ENCODE measurements at regions of chr1 and their contacts with region 1.

Region 1: GRCh38 chr1:94045465-94046056 is 75.4 kb downstream of the ABCA4 start:
- DNase-seq: peak; percentile 83
- ATAC-seq: peak; percentile 78
- H3K4me3 ChIP-seq: peak overlapping the region; percentile 14 to 71 (median 17); a peak in 5 of 6 replicates
- H3K27ac ChIP-seq: no peak overlapping the region
- H3K4me1 ChIP-seq: peaks cover 52% of the 10 kb centered on the region
- H3K27me3 ChIP-seq: no peaks in the 10 kb centered on the region
- CTCF ChIP-seq: peak; percentile 89
- EP300 ChIP-seq: no peak
- POLR2A ChIP-seq: no peak
- RAD21 ChIP-seq: peak; percentile 87

Region 2: DNA sequence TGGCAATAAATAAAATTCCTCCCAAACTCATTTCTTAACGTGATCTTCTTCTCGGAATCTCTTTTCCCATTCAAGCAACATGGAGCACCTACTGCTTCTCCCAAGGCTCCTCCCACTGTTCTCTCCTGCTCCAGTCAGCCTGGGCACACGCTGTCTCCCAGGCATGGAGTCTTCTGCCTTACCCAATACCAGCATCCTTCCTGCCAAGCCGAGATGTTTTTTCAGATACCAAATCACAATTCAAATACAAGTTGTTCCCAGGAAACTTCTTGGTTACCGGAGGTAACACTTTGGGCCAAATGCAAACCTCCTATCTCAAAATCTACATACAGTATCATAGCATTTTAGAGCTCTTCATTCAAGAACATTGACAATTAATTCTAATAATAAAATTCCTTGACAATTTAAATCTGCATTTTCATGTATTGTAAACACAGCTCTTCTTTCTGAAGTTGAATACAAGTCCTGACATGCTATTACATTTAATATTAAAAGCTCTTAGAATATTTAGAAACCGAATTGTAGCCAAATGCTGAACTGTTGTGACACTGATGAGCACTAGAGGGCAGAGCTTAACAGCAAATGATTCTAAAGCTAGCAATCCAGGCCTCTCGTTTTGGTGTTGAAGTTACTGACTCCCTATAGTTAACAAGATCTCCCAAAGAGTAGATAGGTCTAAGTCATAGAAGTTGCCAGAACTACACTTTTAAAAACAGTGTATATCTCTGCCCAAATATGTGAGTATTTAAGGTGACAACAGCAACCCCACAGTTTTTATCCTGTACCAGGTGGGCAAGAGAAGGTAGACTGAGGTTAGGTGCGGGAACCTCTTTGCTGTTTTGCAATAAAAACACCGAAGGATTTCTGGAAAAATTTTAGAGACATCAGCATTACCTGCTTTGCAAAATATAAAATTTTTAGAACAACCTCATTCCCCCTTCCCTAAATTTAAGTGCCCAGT is 416.2 kb before region 1 on chr1:
- CTCF ChIA-PET with region 1: no interaction called
- POLR2A ChIA-PET with region 1: no interaction called
- in situ Hi-C with region 1: no loop called
- intact Hi-C with region 1: no loop called
- DNase-seq: peak; percentile 65
- ATAC-seq: peak; percentile 71
- H3K4me3 ChIP-seq: no peak overlapping the region
- H3K27ac ChIP-seq: no peak overlapping the region
- H3K4me1 ChIP-seq: peaks cover 26% of the 10 kb centered on the region
- H3K27me3 ChIP-seq: no peaks in the 10 kb centered on the region
- CTCF ChIP-seq: peak; percentile 84
- EP300 ChIP-seq: no peak
- POLR2A ChIP-seq: no peak
- RAD21 ChIP-seq: peak; percentile 89

Region 3: DNA sequence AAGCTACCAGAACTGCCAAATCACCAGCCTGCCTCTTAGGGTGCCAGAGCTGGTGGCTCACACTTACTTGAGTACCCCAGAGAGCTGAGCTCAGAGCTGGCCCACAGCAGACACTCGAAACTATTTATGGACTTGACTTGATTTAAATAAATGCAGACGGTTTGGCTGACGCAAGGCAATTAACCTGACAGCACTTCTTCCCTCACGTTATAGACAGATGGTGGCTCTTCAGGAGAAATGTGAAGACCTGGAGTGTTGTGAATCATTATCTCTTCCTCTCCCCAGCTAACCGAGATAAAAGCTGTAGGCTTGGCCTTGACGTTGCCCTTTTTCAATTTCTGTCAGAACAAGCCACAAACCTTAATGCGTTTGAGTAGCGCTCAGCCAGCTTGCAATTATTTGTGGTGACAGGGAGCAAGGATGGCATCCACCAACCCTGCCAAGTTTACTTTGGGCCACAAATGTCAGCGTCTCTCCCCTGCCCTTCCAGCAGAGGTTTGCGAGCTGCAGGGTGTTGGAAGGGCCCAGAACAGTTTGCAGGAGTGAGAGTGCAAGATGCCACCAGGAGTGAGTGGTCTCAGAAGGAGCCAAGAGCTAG is 329.9 kb before region 1 on chr1:
- CTCF ChIA-PET with region 1: no interaction called
- POLR2A ChIA-PET with region 1: no interaction called
- in situ Hi-C with region 1: no loop called
- intact Hi-C with region 1: no loop called
- DNase-seq: no peak
- ATAC-seq: no peak
- H3K4me3 ChIP-seq: no peak overlapping the region
- H3K27ac ChIP-seq: no peak overlapping the region
- H3K4me1 ChIP-seq: peaks cover 21% of the 10 kb centered on the region
- H3K27me3 ChIP-seq: 0 out of 5 replicates have a peak, but pooled peaks cover 0 to under 1% of the 10 kb centered on the region in 2 experiments
- CTCF ChIP-seq: no peak
- EP300 ChIP-seq: no peak
- POLR2A ChIP-seq: no peak
- RAD21 ChIP-seq: no peak

Region 4: GRCh38 chr1:94033849-94034248 is 11.7 kb before region 1 on chr1:
- CTCF ChIA-PET with region 1: no interaction called
- POLR2A ChIA-PET with region 1: interaction called, 11 read pairs
- in situ Hi-C with region 1: no loop called
- intact Hi-C with region 1: no loop called
- DNase-seq: peak; percentile 95
- ATAC-seq: peak; percentile 96
- H3K4me3 ChIP-seq: peak overlapping the region in 1 of 3 experiments; percentile 45; a peak in 2 of 6 replicates
- H3K27ac ChIP-seq: peak overlapping the region; percentile 48
- H3K4me1 ChIP-seq: peaks cover 80% of the 10 kb centered on the region
- H3K27me3 ChIP-seq: no peaks in the 10 kb centered on the region
- CTCF ChIP-seq: no peak
- EP300 ChIP-seq: peak in 1 of 2 experiments; percentile 68; a peak in 1 of 4 replicates
- POLR2A ChIP-seq: no peak
- RAD21 ChIP-seq: no peak

Region 5: DNA sequence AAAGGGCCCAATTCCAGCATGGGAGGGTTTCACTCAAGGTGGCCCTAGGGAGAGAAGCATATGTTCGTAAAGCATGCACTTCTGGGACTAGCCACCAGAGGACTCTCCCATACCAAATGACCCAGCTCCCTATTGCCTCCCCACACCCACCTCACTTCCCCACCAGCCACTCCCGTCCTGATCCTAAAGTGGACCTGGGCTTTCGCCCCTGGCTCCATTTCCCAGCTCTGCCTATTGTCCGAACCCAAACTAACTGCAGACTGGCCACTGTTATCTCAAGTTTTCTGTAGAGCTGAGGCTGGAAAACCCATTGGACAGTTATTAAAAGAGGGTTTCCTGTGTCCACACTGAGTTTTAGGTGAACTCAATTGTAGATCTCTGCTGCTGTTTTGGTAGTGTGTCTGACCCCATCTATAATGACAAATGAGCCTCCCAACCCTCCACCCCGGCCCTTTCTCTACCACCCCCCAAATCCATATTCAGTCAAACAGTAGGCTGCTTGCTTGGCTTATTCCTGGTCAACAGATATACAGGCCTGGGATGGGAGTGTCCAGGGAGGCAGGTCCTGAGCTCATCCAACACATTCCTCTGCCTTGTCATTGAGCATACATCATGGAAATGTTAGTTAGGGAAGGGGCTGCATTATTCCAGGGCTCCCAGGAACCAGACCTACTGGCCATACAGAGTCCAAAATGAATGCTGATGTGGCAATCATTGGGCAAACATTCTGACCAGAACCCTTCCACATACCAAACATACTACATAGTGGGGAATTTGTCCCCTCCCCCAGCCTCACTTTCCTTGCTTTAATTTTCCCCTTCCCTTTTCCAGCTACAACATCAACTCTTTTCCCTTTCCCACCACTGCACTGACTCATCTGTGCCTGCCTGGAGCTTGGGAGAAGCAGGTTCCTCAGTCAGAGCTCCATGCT is 16.2 kb after region 1 on chr1:
- CTCF ChIA-PET with region 1: no interaction called
- POLR2A ChIA-PET with region 1: interaction called, 18 read pairs
- in situ Hi-C with region 1: no loop called
- intact Hi-C with region 1: loop called (anchors 2 kb)
- DNase-seq: peak; percentile 97
- ATAC-seq: peak; percentile 91
- H3K4me3 ChIP-seq: peak overlapping the region; percentile 14 to 58 (median 52); a peak in 5 of 6 replicates
- H3K27ac ChIP-seq: peak overlapping the region; percentile 63
- H3K4me1 ChIP-seq: peaks cover 57% of the 10 kb centered on the region
- H3K27me3 ChIP-seq: no peaks in the 10 kb centered on the region
- CTCF ChIP-seq: peak; percentile 95
- EP300 ChIP-seq: peak in 1 of 2 experiments; percentile 56; a peak in 1 of 4 replicates
- POLR2A ChIP-seq: no peak
- RAD21 ChIP-seq: peak; percentile 96

Region 6: DNA sequence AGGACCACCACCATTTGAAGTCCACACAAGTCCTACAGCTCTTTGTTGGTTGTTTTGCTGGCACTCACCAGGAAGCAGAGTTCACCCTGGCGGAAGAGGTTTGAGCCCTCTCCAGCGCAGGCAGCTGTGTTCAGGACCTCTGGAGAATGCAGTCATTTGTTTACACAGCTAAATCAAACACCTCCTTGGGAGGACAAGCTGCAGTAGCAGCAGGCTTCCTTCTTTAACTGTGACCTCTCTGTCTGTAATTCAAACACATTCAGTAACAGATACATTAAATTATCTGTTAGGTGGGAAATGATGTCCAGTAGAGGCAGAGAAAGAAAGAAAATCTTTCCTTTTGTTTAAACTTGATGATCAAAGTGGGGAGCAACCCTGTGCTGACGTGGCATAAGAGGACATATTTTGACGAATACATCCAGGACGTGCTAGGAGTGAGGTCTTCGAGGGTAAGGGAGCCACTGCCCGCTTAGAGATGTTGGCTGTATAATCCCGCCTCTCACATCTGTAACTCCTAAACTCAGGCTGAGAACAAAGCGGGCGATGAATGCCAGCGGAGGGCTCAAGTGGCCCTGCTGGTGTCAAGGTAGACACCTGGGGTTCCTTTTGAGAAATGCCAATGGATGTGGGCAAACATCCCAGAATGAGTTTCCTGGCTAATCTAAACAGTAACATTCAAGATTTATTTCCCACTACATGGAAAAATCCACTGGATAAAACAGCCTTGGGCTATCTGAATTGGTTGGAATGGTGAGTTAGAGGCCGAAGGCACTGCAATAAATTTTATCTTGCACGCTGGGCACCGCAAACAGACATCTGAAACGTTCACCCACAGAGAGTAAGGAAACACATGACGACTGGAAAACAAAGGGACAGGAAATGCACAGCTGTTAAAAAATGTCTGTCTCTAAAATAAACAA is 23.7 kb after region 1 on chr1:
- CTCF ChIA-PET with region 1: no interaction called
- POLR2A ChIA-PET with region 1: interaction called, 11 read pairs
- in situ Hi-C with region 1: no loop called
- intact Hi-C with region 1: no loop called
- DNase-seq: peak; percentile 87
- ATAC-seq: peak; percentile 93
- H3K4me3 ChIP-seq: peak overlapping the region in 2 of 3 experiments; percentile 19 to 50; a peak in 4 of 6 replicates
- H3K27ac ChIP-seq: peak overlapping the region; percentile 77
- H3K4me1 ChIP-seq: peaks cover 37% of the 10 kb centered on the region
- H3K27me3 ChIP-seq: no peaks in the 10 kb centered on the region
- CTCF ChIP-seq: no peak
- EP300 ChIP-seq: peak in 1 of 2 experiments; percentile 63; a peak in 2 of 4 replicates
- POLR2A ChIP-seq: no peak; a peak in 1 of 4 replicates
- RAD21 ChIP-seq: no peak

Region 7: DNA sequence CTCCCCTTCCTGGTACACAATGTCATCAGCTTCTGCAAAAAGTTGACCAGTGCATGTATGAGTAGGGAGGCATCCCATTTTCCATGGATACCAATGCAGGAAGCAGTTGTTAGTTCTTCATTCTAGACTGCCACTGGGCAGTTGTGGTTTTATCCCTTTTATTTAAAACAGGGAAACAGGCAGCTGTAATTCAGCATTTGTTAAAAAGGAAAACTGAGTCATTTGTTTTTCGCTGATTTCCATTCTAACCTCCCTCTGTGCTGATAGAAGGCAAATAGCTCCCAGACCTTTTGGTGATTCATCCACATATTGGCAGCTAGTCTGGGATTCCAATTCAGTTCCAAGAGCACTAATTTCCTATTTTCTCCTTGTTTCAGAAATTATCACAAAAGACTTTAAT is 96.5 kb after region 1 on chr1:
- CTCF ChIA-PET with region 1: no interaction called
- POLR2A ChIA-PET with region 1: no interaction called
- in situ Hi-C with region 1: no loop called
- intact Hi-C with region 1: no loop called
- DNase-seq: no peak
- ATAC-seq: no peak
- H3K4me3 ChIP-seq: no peak overlapping the region
- H3K27ac ChIP-seq: no peak overlapping the region
- H3K4me1 ChIP-seq: peaks cover 13% of the 10 kb centered on the region
- H3K27me3 ChIP-seq: no peaks in the 10 kb centered on the region; a peak in 1 of 5 replicates
- CTCF ChIP-seq: no peak
- EP300 ChIP-seq: no peak
- POLR2A ChIP-seq: no peak
- RAD21 ChIP-seq: no peak

Region 8: GRCh38 chr1:94329986-94330385 is 284.4 kb after region 1 on chr1:
- CTCF ChIA-PET with region 1: interaction called, 25 read pairs
- POLR2A ChIA-PET with region 1: interaction called, 18 read pairs
- in situ Hi-C with region 1: loop called (anchors 5 kb)
- intact Hi-C with region 1: loop called (anchors 1 kb)
- DNase-seq: peak; percentile 67
- ATAC-seq: peak; percentile 90
- H3K4me3 ChIP-seq: peak overlapping the region in 2 of 3 experiments; percentile 22 to 26; a peak in 2 of 6 replicates
- H3K27ac ChIP-seq: no peak overlapping the region
- H3K4me1 ChIP-seq: peaks cover 59% of the 10 kb centered on the region
- H3K27me3 ChIP-seq: no peaks in the 10 kb centered on the region
- CTCF ChIP-seq: peak; percentile 82
- EP300 ChIP-seq: no peak
- POLR2A ChIP-seq: no peak
- RAD21 ChIP-seq: peak; percentile 61; the same call in 1 of the 2 replicates

Region 9: DNA sequence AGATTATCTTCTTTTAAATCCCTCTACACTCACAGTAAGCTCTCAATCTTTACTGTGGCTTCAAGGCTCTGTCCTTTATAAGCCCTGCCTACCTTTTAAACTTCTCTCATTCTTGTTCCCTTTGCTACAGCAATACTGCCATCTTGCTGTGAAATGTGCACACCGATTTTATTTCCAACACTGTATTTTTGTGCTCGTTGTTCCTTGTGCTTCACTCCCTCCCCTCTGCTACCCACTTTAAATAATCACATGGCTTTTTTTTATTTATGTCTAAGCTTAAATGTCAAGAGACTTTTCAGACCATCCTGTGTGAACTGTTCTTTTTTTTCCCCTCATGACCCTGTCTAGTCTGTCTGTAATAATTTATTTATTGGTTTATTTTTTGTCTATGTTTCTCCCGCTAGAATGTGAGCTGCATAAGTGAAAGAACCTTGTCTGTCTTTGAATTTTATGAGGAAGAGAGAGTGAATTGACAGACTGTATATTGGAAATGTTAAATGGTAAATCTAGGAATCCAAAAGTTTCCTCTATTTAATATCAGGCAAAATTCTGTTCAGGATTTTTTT is 418.3 kb after region 1 on chr1:
- CTCF ChIA-PET with region 1: no interaction called
- POLR2A ChIA-PET with region 1: no interaction called
- in situ Hi-C with region 1: no loop called
- intact Hi-C with region 1: loop called (anchors 5 kb)
- DNase-seq: peak; percentile 71
- ATAC-seq: peak; percentile 91
- H3K4me3 ChIP-seq: no peak overlapping the region
- H3K27ac ChIP-seq: peak overlapping the region; percentile 3
- H3K4me1 ChIP-seq: peaks cover 35% of the 10 kb centered on the region
- H3K27me3 ChIP-seq: no peaks in the 10 kb centered on the region
- CTCF ChIP-seq: peak; percentile 85
- EP300 ChIP-seq: no peak
- POLR2A ChIP-seq: no peak
- RAD21 ChIP-seq: peak; percentile 79

Measured in HepG2 (cell line).